B cell (primary cell): ENCODE measurements at regions of chrX and their contacts with region 1.

Region 1: DNA sequence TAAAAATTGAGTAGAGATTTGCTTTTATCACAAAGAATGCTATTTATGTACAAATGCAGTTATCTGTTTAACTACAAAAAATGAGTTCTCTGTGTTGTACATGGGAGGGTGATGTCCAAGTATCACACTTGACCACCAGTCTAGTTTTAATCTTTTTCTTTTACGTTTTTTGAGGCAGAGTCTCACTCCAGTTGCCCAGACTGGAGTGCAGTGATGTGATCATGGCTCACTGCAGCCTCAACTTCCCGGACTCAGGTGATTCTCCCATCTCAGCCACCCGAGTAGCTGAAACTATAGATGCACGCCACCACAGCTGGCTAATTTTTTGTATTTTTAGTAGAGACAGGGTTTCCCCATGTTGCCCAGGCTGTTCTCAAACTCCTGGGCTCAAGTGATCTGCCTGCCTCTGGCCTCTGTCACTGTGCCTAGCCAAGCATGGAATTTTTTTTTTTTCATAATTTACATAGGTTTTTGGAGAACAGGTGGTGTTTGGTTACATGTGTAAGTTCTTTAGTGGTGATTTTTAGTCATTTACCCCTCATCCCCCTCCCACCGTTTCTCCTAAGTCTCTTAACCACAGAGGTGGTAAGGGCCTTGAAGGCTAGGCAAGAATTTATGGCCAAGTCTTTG is 47.9 kb upstream of the RPA4 start:
- DNase-seq: peak; percentile 71
- ATAC-seq: peak; percentile 91
- H3K4me3 ChIP-seq: no peak overlapping the region
- H3K4me3 Mint-ChIP-seq: peak overlapping the region; percentile 70
- H3K27ac ChIP-seq: peak overlapping the region; percentile 35 to 41
- H3K27ac Mint-ChIP-seq: peak overlapping the region; percentile 80
- H3K4me1 ChIP-seq: peaks cover 6 to 20% of the 10 kb centered on the region in 2 donors
- H3K4me1 Mint-ChIP-seq: peaks cover 18% of the 10 kb centered on the region
- H3K27me3 ChIP-seq: no peaks in the 10 kb centered on the region
- H3K27me3 Mint-ChIP-seq: no peaks in the 10 kb centered on the region
- CTCF ChIP-seq: no peak

Region 2: DNA sequence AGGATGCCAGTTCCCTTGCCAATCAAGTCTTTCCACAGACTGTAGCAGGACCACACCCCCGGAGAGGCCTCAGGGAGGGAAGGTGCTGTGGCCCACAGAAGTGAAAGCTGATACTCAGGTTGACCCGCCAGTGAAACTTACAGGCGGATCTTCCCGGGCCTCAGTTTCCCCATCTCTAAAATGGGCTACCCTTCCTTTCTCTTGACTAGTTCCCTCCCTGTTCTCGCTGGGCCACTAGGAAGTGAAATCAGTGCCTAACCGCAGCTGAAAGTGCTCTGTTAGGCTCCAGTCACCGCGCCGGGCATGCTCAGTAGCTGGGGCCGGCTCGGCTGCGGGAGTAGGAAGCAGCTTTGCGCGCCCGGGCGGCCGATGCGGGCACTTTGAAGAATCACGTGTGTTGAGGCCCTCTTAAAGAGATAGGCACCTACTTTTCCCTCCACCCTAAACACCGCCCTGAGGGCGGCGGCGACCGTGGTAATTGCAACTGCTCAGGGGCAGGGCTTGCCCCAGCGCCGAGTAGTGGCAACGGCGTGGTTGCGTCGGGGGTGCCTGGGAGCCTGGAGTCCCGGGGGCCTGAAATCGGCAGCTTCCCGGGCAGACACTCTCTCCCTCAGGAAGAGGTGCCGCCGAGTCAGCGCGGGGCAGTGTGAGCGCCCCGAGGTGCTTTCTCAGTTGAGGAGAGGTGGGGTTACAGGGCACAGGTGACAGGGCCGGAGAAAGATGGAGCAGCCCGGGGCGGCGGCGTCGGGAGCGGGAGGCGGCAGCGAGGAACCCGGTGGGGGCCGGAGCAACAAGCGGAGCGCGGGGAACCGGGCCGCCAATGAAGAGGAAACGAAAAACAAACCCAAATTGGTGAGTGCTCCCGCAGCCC is 151.2 kb before region 1 on chrX and contains the start of gene DIAPH2:
- CTCF ChIA-PET with region 1: no interaction called
- POLR2A ChIA-PET with region 1: no interaction called
- intact Hi-C with region 1: loop called (anchors 2 kb)
- DNase-seq: peak; percentile 86
- ATAC-seq: peak; percentile 76
- H3K4me3 ChIP-seq: peak within 1 kb of the TSS; percentile 62 to 84 (median 69)
- H3K4me3 Mint-ChIP-seq: peak within 1 kb of the TSS; percentile 89
- H3K27ac ChIP-seq: peak within 1 kb of the TSS; percentile 73 to 77
- H3K27ac Mint-ChIP-seq: peak within 1 kb of the TSS; percentile 90
- H3K4me1 ChIP-seq: peaks cover 4 to 13% of the 10 kb centered on the region in 2 donors
- H3K4me1 Mint-ChIP-seq: peaks cover 34% of the 10 kb centered on the region
- H3K27me3 ChIP-seq: no peaks in the 10 kb centered on the region
- H3K27me3 Mint-ChIP-seq: no peaks in the 10 kb centered on the region
- CTCF ChIP-seq: no peak
- total RNA-seq, gene DIAPH2: 32.4 and 32.9 TPM in 2 replicates